Right lobe of liver (tissue), 6 donors: ENCODE measurements at regions of chr3 and their contacts with region 1.

Region 1: GRCh38 chr3:194315088-194315964 is 35.8 kb downstream of the CPN2 start:
- DNase-seq: peak; percentile 86 to 89 (median 87)
- ATAC-seq: peak; percentile 88 to 94 (median 92)
- H3K4me3 ChIP-seq: peak overlapping the region; percentile 42 to 56 (median 53)
- H3K27ac ChIP-seq: peak overlapping the region in 2 of 3 donors; percentile 36 to 37
- H3K4me1 ChIP-seq: peaks cover 0 to 10% (median 5%) of the 10 kb centered on the region in 4 donors
- H3K27me3 ChIP-seq: no peaks in the 10 kb centered on the region
- CTCF ChIP-seq: peak; percentile 97 to 99 (median 98)
- POLR2A ChIP-seq: peak; percentile 50

Region 2: GRCh38 chr3:193772422-193772763 is 542.9 kb before region 1 on chr3:
- intact Hi-C with region 1: loop called in 1 of 2 experiments (anchors 5 kb)
- DNase-seq: no peak
- ATAC-seq: no peak
- H3K4me3 ChIP-seq: no peak overlapping the region
- H3K27ac ChIP-seq: no peak overlapping the region
- H3K4me1 ChIP-seq: no peaks in the 10 kb centered on the region
- H3K27me3 ChIP-seq: no peaks in the 10 kb centered on the region
- CTCF ChIP-seq: no peak
- POLR2A ChIP-seq: no peak

Region 3: DNA sequence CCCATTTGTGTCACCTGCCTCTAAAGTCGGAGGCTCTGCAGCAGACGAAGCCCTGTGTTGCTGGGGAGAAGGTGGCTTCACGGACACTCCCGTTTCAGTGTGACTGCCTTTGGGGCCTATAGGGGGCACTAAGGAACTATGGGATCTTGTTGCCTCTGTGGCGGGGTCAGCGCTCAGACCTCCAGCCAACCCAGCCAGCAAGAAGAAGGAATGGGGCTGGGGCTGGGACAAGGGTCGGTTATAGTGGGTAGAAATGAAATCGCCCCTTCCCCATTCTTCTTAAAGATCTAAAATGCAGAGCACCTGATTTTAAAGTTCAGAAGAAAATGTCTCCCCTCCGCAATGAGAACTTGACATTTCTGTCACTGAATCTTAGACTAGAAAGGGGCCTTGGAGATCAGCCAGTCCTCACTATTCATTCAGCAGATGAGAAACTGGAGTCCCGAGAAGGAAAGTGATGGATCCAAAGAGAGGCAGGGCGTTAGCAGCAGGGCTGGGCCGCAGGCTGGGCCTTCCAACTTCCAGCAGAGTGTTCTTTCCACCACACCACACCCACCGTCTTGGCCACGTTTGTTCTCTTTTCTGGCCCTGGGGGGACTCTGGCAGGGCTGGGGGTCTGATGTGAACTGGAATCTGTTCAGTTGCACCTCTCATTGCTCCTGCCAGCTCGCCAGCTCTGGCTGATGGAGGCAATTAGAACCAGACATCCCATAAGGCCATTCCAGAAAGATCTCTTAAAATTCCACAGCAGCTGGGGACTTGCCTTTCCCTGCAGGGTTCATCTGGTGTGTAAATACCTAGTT is 526.9 kb before region 1 on chr3:
- intact Hi-C with region 1: loop called in 1 of 2 experiments (anchors 5 kb)
- DNase-seq: peak in 2 of 3 donors; percentile 54 to 66
- ATAC-seq: peak; percentile 98 to 99 (median 98)
- H3K4me3 ChIP-seq: no peak overlapping the region
- H3K27ac ChIP-seq: no peak overlapping the region
- H3K4me1 ChIP-seq: peaks cover 0 to 5% (median 0%) of the 10 kb centered on the region in 4 donors
- H3K27me3 ChIP-seq: no peaks in the 10 kb centered on the region
- CTCF ChIP-seq: peak; percentile 75 to 83 (median 80)
- POLR2A ChIP-seq: no peak

Region 4: DNA sequence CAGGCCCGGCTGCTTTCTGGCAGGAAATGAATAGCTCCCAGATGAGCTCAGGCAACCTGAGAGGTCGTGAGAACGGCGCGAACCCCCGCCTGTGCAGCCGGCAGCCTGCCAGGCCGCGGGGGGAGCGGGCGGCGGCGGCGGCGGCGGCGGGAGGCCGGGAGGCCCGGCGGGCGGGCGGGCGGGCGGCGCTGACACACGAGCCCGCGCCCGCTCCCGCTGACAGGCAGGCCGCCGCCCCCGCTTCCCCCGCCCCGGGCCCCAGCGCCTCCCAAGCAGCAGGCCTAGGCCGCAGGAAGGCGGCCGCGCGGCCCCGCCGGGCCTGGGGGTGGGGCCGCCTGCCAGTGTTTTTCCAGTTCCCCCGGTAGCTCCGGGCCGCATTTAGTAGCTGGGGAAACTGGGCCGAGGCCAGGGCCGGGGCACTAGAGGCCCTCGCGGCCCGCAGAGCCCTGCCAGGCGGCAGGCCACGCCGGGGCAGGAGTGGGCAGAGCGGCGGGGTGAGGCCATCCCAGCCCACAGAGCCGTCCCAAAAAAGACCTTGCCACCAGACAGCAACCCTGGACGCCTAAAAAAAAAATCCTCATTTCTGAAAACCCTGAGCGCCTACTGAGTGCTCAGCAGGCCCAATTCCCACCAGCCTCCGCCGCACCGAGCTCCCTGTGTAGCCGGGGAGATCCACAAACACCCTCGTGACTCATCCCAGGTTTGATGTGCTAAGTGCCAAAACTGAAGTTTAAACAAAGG is 173.7 kb before region 1 on chr3:
- intact Hi-C with region 1: loop called in 1 of 2 experiments (anchors 5 kb)
- DNase-seq: peak; percentile 94 to 95 (median 94)
- ATAC-seq: peak; percentile 56 to 77 (median 68)
- H3K4me3 ChIP-seq: peak overlapping the region; percentile 17 to 52 (median 21)
- H3K27ac ChIP-seq: peak overlapping the region; percentile 88 to 97 (median 94)
- H3K4me1 ChIP-seq: peaks cover 0 to 48% (median 21%) of the 10 kb centered on the region in 4 donors
- H3K27me3 ChIP-seq: no peaks in the 10 kb centered on the region
- CTCF ChIP-seq: peak in 1 of 4 donors; percentile 3
- POLR2A ChIP-seq: peak; percentile 46

Region 5: GRCh38 chr3:194158922-194159439 is 156.3 kb before region 1 on chr3:
- intact Hi-C with region 1: loop called (anchors 10 kb)
- DNase-seq: no peak
- ATAC-seq: peak in 1 of 4 donors; percentile 75
- H3K4me3 ChIP-seq: no peak overlapping the region
- H3K27ac ChIP-seq: no peak overlapping the region
- H3K4me1 ChIP-seq: no peaks in the 10 kb centered on the region
- H3K27me3 ChIP-seq: no peaks in the 10 kb centered on the region
- CTCF ChIP-seq: no peak
- POLR2A ChIP-seq: no peak

Region 6: DNA sequence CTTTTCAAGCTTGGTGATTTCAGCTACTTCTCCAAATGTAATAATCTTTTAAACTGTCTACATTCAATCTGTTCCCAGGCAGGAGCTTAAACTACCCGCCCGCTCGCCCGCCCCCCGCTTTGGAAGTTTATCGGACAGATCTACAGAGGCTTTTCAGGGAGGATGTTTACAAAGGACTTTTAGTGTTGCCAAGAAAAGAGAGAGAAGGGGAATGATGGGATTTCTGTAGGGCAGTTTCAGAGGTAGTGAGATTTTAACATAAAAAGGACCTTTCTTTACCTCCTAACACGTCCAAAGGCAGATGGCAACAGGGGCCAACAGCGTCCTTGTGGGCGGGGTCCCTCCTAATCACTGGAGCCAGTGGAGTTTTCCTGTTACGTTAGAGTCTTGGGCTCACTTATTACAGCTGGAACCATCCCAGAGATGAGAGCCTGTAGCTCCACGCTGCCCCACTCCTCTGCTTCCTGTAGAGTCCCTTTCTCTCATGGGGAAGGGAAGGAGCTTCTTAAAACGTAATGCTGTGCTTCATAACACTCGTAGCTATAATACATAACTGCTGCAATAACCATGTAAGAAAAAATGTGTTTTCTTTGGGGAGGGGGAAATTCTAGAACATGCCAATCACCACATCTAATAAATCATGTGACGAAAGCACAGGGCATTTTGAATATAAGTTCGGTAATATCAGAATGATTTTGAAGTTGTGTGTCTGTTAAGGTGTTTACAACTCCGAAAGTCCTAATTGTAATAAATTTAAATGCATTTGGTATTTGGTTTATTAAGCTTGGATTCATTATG is 148.4 kb before region 1 on chr3:
- intact Hi-C with region 1: loop called in 1 of 2 experiments (anchors 10 kb)
- DNase-seq: no peak
- ATAC-seq: peak; percentile 23 to 47 (median 34)
- H3K4me3 ChIP-seq: no peak overlapping the region
- H3K27ac ChIP-seq: no peak overlapping the region
- H3K4me1 ChIP-seq: peaks cover 0 to 11% (median 2%) of the 10 kb centered on the region in 4 donors
- H3K27me3 ChIP-seq: no peaks in the 10 kb centered on the region
- CTCF ChIP-seq: no peak
- POLR2A ChIP-seq: no peak